Body of pancreas (tissue), 4 donors: ENCODE measurements at regions of chr1 and their contacts with region 1.

Region 1: DNA sequence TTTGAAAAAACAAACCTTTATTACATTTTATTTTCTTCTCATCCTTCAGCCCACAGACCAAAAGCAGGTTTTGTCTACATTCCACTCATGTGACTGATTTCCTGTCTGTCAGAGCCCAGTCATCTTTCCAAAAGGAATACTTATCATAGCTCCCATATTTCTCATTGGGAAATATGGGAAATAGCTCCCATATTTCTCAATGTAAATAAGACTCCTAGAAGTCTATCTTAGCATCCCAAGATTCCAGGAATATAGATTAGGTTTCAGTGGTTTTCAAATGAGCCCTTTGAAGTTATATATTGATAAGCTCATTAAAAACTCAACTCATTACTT is 19.1 kb upstream of the NRDC start:
- DNase-seq: no peak
- ATAC-seq: no peak
- H3K4me3 ChIP-seq: no peak overlapping the region
- H3K27ac ChIP-seq: no peak overlapping the region
- H3K4me1 ChIP-seq: no peaks in the 10 kb centered on the region
- H3K27me3 ChIP-seq: no peaks in the 10 kb centered on the region
- CTCF ChIP-seq: no peak
- POLR2A ChIP-seq: no peak

Region 2: DNA sequence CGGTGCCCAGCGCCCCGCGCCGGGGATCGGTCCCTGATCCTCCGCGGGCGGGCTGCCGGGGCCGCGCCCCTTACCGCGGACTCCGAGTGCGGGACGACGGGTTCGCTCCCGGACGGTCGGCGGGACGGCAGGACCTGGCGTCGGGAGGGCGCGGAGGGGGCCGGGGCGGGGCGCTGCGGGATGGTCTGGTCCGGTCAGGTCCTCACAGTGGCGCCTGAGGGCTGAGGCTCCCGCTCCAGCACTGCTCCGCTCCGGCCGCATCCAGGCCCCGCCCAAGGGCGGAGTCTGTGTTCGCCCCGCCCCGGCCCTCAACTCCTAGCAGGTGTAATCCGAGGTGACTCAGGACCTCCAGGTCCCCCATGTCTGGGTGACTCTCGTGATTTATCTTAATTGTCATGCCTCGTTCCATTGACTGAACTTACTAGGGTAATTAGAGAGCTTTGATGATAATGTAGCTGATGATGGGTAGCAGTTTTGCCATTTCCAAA is 92.9 kb after region 1 on chr1 and contains the start of gene RAB3B:
- intact Hi-C with region 1: loop called (anchors 5 kb)
- DNase-seq: peak; percentile 80 to 89 (median 81)
- ATAC-seq: peak; percentile 90
- H3K4me3 ChIP-seq: peak within 1 kb of the TSS in 1 of 2 donors; percentile 44
- H3K27ac ChIP-seq: no peak within 1 kb of the TSS
- H3K4me1 ChIP-seq: peaks cover 9% of the 10 kb centered on the region
- H3K27me3 ChIP-seq: peaks cover 0 to 13% of the 10 kb centered on the region in 2 donors
- CTCF ChIP-seq: no peak
- POLR2A ChIP-seq: no peak
- total RNA-seq, gene RAB3B: 1.3 to 2.9 TPM

Region 3: GRCh38 chr1:52002038-52002917 is 104.6 kb after region 1 on chr1:
- intact Hi-C with region 1: loop called (anchors 5 kb)
- DNase-seq: peak; percentile 60 to 89 (median 70)
- ATAC-seq: peak; percentile 95
- H3K4me3 ChIP-seq: no peak overlapping the region
- H3K27ac ChIP-seq: no peak overlapping the region
- H3K4me1 ChIP-seq: peaks cover 24% of the 10 kb centered on the region
- H3K27me3 ChIP-seq: no peaks in the 10 kb centered on the region
- CTCF ChIP-seq: peak; percentile 85 to 97 (median 96)
- POLR2A ChIP-seq: no peak